GM10248 (cell line): ENCODE measurements at regions of chr6 and their contacts with region 1.

Region 1: DNA sequence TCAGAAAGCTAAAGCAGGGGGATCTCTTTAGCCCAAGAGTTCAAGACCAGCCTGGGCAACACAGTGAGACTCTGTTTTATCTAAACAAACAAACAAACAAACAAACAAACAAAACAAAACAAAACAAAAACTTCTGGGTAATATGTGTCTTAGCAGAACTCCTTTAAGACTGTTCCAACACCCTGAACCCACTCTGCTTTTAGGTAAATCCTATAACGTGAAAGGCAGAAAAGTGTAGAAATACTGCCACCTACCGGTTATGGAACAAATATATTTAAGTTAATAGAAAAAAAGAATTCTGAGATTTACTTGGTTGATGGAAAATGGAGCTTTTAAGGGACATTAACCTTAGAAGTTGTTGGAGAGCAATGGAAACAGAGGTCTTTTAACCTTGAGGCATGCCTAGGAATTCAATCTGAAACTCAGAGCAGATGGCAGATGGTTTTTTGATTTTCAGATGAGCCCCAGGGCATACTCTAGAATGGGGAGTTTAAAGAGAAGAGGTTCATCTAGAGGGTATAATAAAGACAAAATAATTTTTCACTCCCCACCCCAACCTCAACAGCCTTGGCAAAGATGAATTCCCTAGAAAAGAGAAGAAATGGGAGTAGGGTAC is 38.5 kb downstream of the SOD2 start:
- DNase-seq: peak; percentile 39
- CTCF ChIP-seq: peak; percentile 53

Region 2: GRCh38 chr6:159174263-159174969 is 480.2 kb before region 1 on chr6:
- CTCF ChIA-PET with region 1: interaction called, 44 read pairs
- POLR2A ChIA-PET with region 1: no interaction called
- DNase-seq: peak; percentile 77
- CTCF ChIP-seq: peak; percentile 99

Region 3: GRCh38 chr6:159252955-159253508 is 401.6 kb before region 1 on chr6:
- CTCF ChIA-PET with region 1: interaction called, 25 read pairs
- POLR2A ChIA-PET with region 1: no interaction called
- DNase-seq: peak; percentile 63
- CTCF ChIP-seq: peak; percentile 34

Region 4: DNA sequence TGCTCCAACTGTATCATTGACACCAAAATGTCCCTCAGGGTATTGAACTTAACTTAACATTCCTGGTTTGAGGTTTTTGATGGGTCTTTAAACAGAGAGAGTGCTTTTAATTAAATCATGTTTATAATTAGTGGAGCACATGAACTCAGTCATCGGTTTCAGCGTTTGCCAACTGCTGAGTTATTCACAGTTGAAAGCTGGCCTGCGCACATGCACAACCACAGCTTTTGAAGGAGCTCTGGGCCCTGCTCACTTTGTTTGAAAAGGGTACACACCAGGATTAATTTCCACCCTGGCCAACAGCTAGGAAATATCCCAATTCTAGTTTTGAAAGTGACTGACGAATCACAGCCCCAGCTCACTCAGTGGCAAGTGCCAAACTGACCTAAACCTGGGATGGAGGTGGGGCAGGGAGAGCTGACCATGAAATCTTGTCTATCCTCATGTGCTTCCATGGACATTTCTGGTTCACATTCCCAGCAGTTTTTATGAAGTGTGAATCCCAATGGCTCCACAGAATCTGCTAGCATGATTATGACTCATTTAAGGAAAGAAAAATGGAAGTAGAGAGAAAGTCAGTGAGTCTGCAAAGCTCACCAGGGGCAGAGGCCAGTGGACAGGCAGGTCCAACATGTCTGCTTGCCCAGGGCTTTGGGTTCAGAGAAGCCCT is 237.6 kb before region 1 on chr6:
- CTCF ChIA-PET with region 1: no interaction called
- POLR2A ChIA-PET with region 1: no interaction called
- DNase-seq: no peak
- CTCF ChIP-seq: no peak

Region 5: DNA sequence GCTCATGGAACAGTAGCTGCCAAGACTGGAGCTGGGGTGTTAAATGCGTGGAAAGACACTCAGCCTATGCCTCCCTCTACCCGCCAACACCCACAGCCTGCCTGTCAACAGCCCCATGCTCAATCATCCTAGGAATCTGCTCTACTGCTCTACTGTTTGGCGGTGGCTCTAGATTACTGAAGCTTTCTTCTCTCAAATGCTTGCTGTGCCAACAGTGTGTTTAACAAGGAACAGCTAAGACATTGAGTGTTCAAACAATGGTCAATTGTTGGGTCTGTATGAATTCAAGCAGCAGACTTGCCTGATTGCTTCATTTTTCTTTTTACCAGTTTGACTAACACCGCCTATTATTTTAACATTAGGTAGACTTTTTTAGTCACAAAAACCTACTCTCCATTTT is 220.2 kb before region 1 on chr6:
- CTCF ChIA-PET with region 1: no interaction called
- POLR2A ChIA-PET with region 1: no interaction called
- DNase-seq: no peak
- CTCF ChIP-seq: no peak

Region 6: DNA sequence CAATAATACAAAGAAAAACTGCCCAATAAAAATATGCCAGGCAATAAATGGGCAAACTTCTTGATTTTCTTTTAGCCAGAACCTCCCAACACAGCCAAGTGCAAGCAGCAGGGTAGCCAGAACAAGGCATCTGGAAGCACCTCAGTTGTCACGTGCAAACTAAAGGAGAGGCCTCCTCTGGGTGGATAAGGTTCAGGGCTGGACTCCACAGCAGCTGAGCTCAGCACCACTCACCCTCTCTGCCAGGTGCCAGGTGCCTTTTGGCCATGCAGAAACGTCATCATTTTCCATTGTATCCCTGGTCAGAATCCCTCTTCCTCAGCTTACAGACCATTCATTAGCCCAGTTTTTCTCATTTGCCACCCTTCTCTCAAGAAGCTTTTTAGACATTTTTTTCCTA is 14.3 kb before region 1 on chr6:
- CTCF ChIA-PET with region 1: interaction called, 33 read pairs
- POLR2A ChIA-PET with region 1: no interaction called
- DNase-seq: no peak
- CTCF ChIP-seq: no peak

Region 7: GRCh38 chr6:159679091-159680077 is 24.8 kb after region 1 on chr6:
- CTCF ChIA-PET with region 1: interaction called, 25 read pairs
- POLR2A ChIA-PET with region 1: no interaction called
- DNase-seq: no peak
- CTCF ChIP-seq: no peak